RWPE1 (cell line): ENCODE measurements at regions of chr17 and their contacts with region 1.

Region 1: DNA sequence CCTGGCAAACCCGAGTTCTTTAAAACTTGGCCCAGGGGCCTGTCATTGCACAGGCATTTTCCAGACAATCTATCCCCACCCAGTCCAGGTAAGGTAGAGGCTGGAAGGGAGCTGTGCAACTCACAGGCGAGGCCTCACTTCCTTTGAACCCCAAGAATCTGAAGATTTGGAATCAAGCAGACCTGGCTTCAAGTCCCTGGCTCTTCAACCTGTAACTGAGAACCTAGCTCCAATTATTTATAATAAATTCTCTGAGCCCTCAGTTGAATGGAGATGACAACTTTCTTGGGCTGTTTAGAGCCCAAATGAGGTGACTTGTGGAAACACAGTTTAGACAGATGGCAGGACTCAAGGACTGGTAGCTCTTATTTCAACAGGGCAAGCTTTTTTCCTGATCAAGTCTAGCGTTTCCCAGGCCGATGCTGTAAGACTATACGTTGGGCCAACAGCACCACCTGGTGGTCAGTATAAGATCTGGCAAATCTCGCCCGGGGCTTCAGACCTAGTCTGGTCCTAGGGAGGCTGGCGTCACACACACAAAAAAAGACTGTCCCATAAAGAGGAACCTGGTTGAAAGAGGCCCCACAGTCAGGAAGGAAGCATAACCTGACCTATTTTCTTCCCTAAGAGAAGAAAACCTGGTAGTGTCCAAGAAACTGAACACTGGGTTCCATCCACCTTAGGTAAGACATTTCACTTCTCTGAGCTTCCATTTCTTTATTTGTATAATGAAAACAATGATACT is 117.9 kb downstream of the C17orf67 start:
- DNase-seq: peak; percentile 76
- H3K27ac ChIP-seq: no peak overlapping the region
- CTCF ChIP-seq: peak; percentile 85

Region 2: DNA sequence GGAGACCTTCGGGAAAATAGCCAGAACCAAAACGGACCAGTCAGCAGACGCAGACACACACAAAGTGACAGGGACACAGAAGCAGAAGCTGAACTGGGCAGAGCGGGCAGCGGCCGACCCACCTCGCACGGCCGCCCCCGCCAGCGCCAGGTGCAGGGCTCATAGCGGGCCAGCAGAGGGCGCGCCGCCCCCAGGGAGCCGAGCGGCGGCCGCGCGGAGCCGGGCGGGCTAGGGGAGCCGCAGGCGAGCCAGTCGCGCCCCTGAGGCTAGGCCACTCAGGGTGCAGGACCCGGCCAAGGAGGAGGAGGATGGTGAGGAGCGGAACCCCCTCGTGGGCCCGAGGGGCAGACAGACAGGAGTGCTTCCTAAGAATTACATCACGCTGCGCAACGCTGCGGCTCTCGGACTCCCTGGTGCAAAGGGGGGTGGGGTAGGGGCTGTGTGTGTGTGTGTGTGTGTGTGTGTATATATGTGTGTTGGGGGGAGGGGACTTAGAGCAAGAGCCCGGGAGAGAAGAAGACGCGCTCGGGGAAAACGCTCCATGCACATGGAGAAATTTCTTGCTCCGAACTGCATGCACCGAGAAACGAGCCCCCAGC is 123.2 kb before region 1 on chr17:
- CTCF ChIA-PET with region 1: interaction called, 69 read pairs
- POLR2A ChIA-PET with region 1: no interaction called
- DNase-seq: peak; percentile 60
- H3K27ac ChIP-seq: peak overlapping the region; percentile 89
- CTCF ChIP-seq: peak; percentile 99

Region 3: GRCh38 chr17:56678249-56679114 is 37.3 kb before region 1 on chr17:
- CTCF ChIA-PET with region 1: interaction called, 11 read pairs
- POLR2A ChIA-PET with region 1: no interaction called
- DNase-seq: no peak
- H3K27ac ChIP-seq: no peak overlapping the region
- CTCF ChIP-seq: no peak

Region 4: DNA sequence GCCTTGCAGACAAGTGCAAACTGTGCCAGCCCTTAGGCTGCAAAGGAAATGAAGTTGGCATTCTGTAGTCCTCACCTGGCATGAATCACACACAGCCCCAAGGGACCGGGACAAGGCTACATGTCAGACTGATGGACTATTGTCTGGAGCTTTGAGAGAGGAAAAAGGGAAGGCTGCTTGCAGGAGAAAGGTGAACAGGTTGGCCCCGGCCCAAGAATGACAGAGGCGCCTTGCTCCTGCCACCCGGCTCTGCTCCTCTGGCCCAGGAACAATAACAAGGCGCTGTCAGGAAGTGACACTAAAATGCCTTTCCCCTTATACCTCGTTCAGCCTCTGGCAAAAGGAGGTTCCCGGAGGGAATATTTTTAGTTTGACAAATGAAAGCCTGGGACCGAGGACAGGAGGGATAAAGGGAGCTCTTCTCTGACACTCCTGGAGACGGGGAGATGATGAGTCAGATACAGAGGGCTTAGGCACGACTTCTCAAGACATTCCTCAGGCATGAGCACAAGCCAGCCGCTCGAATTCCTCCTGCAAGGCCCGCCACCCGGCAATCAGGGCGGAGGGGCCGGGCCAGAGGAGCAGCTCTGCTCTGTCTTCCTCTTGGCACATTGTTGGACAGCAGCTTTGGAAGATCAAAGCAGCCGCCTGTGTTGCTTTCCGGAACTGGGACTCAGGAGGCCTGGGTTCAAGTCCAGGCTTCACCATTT is 16.4 kb before region 1 on chr17:
- CTCF ChIA-PET with region 1: interaction called, 11 read pairs
- POLR2A ChIA-PET with region 1: no interaction called
- DNase-seq: peak; percentile 99
- H3K27ac ChIP-seq: peak overlapping the region; percentile 92
- CTCF ChIP-seq: no peak

Region 5: DNA sequence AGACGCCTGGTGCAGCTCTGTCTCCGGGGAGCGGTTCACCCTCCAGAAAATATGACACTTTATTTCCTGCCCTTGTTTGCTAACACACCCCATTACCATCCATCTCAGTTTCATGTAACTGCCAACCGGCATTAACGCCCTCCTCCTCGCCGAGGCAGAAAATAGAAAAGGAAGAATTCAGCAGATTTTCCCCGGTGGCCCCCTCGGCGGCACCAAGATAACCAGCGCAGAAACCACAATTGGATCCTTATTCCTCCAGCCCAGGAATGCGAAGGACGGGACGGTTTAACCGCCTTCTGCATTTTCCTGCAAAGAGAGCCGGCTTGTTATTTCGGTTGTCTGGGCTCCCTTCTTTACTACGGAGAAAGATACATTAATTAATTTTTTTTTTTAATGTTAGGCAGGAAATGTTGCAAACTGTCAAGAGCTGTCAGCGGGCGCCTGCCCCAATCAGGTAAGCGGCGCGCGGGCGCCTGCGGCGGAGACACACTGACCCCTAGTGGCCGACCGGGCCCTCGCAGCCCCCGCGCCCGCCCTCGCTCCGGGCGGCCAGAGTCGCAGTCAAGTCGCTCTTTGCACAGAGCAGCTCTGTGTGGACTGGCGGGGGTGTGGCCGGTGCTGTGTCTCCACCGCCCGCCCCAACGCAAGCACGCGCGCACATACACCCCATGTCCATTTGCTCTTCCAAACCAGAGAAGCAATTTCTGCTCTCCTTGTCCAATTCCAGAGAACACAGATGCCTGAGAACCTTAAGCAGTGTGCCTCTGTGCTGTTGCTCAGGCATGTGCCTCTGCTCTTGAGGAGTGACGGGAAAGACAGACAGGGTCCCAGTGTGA is 64.3 kb after region 1 on chr17:
- CTCF ChIA-PET with region 1: interaction called, 13 read pairs
- POLR2A ChIA-PET with region 1: no interaction called
- DNase-seq: peak; percentile 74
- H3K27ac ChIP-seq: peak overlapping the region; percentile 47
- CTCF ChIP-seq: peak; percentile 100

Region 6: DNA sequence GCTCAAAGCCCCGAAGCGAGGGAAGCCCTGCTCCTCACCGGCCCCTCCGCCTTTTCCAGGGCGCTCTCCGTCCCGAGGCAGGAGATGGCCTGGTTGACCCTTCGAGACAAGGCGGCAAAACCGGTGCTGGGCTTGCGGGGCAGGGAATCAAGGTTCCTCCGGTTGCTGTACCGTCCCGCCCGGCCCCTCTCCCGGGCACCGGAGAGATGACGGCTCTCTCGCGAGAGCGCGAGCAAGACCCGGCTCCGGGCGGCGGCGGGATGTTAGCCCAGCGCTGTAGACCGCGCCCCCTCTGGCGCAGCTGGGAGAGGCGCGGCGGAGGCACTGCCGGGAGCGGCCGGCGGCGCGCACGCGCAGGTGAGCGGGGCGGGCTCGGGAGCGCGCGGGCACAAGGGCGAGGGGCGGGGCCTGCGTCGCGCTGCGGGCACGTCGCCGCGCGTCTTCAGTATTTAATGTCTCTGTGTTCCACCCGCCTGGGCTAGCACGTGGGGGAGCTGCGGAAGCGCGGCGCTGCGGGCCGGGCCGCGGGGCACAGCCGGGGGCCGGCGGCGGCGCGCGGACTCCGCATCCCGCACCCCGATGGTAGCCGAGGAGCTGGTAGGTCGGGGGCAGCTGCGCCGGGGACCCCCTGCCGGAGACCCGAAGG is 369.1 kb after region 1 on chr17 and contains the start of gene AKAP1:
- CTCF ChIA-PET with region 1: no interaction called
- POLR2A ChIA-PET with region 1: no interaction called
- DNase-seq: peak; percentile 99
- H3K27ac ChIP-seq: peak within 1 kb of the TSS; percentile 89
- CTCF ChIP-seq: peak; percentile 42; the same call in 1 of the 2 replicates